Left ventricle myocardium superior (tissue), 1 donor: ENCODE measurements at regions of chr1 and their contacts with region 1.

Region 1: GRCh38 chr1:9867408-9868243 is 42.4 kb downstream of the CTNNBIP1 start:
- DNase-seq: peak; percentile 88
- ATAC-seq: peak; percentile 86

Region 2: GRCh38 chr1:9784508-9785133 is 83.0 kb before region 1 on chr1:
- intact Hi-C with region 1: loop called (anchors 5 kb)
- DNase-seq: no peak
- ATAC-seq: no peak